Activated CD8-positive, alpha-beta memory T cell treated with anti-CD3 and anti-CD28 coated beads, Interleukin-2, amount 10 ng/mL, durations not matched to agents 7 days and 5 days (primary cell): ENCODE measurements at regions of chr17 and their contacts with region 1.

Region 1: GRCh38 chr17:42312285-42313130 is 24.2 kb downstream of the STAT5A start:
- DNase-seq: peak; percentile 85
- ATAC-seq: peak; percentile 86
- H3K4me3 Mint-ChIP-seq: peak overlapping the region; percentile 9
- H3K27ac Mint-ChIP-seq: peak overlapping the region; percentile 34
- H3K4me1 Mint-ChIP-seq: peaks cover 33% of the 10 kb centered on the region
- H3K27me3 Mint-ChIP-seq: no peaks in the 10 kb centered on the region

Region 2: GRCh38 chr17:42221937-42222745 is 90.4 kb before region 1 on chr17:
- CTCF ChIA-PET with region 1: interaction called, 15 read pairs
- DNase-seq: peak; percentile 68
- ATAC-seq: peak; percentile 83
- H3K4me3 Mint-ChIP-seq: no peak overlapping the region
- H3K27ac Mint-ChIP-seq: peak overlapping the region; percentile 52
- H3K4me1 Mint-ChIP-seq: peaks cover 4% of the 10 kb centered on the region
- H3K27me3 Mint-ChIP-seq: no peaks in the 10 kb centered on the region

Region 3: GRCh38 chr17:42287926-42288802 is 24.3 kb before region 1 on chr17 and contains the start of gene STAT5A:
- CTCF ChIA-PET with region 1: interaction called, 17 read pairs
- DNase-seq: peak; percentile 91
- ATAC-seq: peak; percentile 84
- H3K4me3 Mint-ChIP-seq: peak within 1 kb of the TSS; percentile 96
- H3K27ac Mint-ChIP-seq: peak within 1 kb of the TSS; percentile 97
- H3K4me1 Mint-ChIP-seq: peaks cover 57% of the 10 kb centered on the region
- H3K27me3 Mint-ChIP-seq: no peaks in the 10 kb centered on the region
- total RNA-seq, gene STAT5A: 118 to 127 TPM

Region 4: DNA sequence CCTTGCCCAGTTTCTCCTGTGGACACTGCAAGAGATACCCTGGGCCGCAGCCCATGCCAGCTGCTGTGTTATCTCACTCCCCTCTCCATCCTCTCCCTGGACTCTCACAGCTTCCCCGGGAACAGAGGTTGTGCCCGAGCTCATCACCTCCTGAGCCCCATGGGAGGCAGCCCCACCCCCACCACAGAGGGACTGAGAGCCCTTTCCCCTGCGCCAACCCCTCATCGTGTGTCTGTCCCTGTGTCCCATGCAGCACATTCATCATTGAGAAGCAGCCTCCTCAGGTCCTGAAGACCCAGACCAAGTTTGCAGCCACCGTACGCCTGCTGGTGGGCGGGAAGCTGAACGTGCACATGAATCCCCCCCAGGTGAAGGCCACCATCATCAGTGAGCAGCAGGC is 11.5 kb before region 1 on chr17:
- CTCF ChIA-PET with region 1: interaction called, 14 read pairs
- DNase-seq: no peak
- ATAC-seq: no peak
- H3K4me3 Mint-ChIP-seq: no peak overlapping the region
- H3K27ac Mint-ChIP-seq: no peak overlapping the region
- H3K4me1 Mint-ChIP-seq: no peaks in the 10 kb centered on the region
- H3K27me3 Mint-ChIP-seq: no peaks in the 10 kb centered on the region

Region 5: GRCh38 chr17:42322382-42323267 is 10.1 kb after region 1 on chr17:
- CTCF ChIA-PET with region 1: interaction called, 53 read pairs
- DNase-seq: peak; percentile 97
- ATAC-seq: peak; percentile 96
- H3K4me3 Mint-ChIP-seq: no peak overlapping the region
- H3K27ac Mint-ChIP-seq: peak overlapping the region; percentile 24
- H3K4me1 Mint-ChIP-seq: peaks cover 44% of the 10 kb centered on the region
- H3K27me3 Mint-ChIP-seq: no peaks in the 10 kb centered on the region

Region 6: GRCh38 chr17:42378597-42379594 is 66.4 kb after region 1 on chr17:
- CTCF ChIA-PET with region 1: no interaction called
- DNase-seq: no peak
- ATAC-seq: peak; percentile 72
- H3K4me3 Mint-ChIP-seq: peak overlapping the region; percentile 76
- H3K27ac Mint-ChIP-seq: peak overlapping the region; percentile 82
- H3K4me1 Mint-ChIP-seq: peaks cover 54% of the 10 kb centered on the region
- H3K27me3 Mint-ChIP-seq: no peaks in the 10 kb centered on the region

Region 7: GRCh38 chr17:42517516-42517915 is 205.0 kb after region 1 on chr17:
- CTCF ChIA-PET with region 1: interaction called, 26 read pairs
- DNase-seq: peak; percentile 85
- ATAC-seq: peak; percentile 91
- H3K4me3 Mint-ChIP-seq: no peak overlapping the region
- H3K27ac Mint-ChIP-seq: no peak overlapping the region
- H3K4me1 Mint-ChIP-seq: no peaks in the 10 kb centered on the region
- H3K27me3 Mint-ChIP-seq: peaks cover 31% of the 10 kb centered on the region